ENCODE measurements at regions of chr1 and their contacts with region 1.

Region 1: GRCh38 chr1:36703526-36704208 is 221.0 kb upstream of the CSF3R start:
- DNase-seq: peak; percentile 89
- ATAC-seq: peak; percentile 96
- H3K4me3 ChIP-seq: no peak overlapping the region
- H3K27ac ChIP-seq: no peak overlapping the region
- H3K4me1 ChIP-seq: no peaks in the 10 kb centered on the region
- H3K27me3 ChIP-seq: peaks cover 12% of the 10 kb centered on the region
- CTCF ChIP-seq: peak; percentile 80

Region 2: GRCh38 chr1:36771660-36772284 is 68.1 kb after region 1 on chr1:
- intact Hi-C with region 1: no loop called
- DNase-seq: peak; percentile 66
- ATAC-seq: peak; percentile 68
- H3K4me3 ChIP-seq: no peak overlapping the region
- H3K27ac ChIP-seq: no peak overlapping the region
- H3K4me1 ChIP-seq: no peaks in the 10 kb centered on the region
- H3K27me3 ChIP-seq: peaks cover 43% of the 10 kb centered on the region
- CTCF ChIP-seq: no peak

Region 3: GRCh38 chr1:37434292-37434907 is 730.7 kb after region 1 on chr1:
- intact Hi-C with region 1: loop called (anchors 10 kb)
- DNase-seq: peak; percentile 84
- ATAC-seq: peak; percentile 83
- H3K4me3 ChIP-seq: no peak overlapping the region
- H3K27ac ChIP-seq: no peak overlapping the region
- H3K4me1 ChIP-seq: no peaks in the 10 kb centered on the region
- H3K27me3 ChIP-seq: peaks cover 18% of the 10 kb centered on the region
- CTCF ChIP-seq: peak; percentile 94